Spleen (tissue), 13 donors: ENCODE measurements at regions of chr7 and their contacts with region 1.

Region 1: GRCh38 chr7:25069900-25070443 is 55.1 kb downstream of the CYCS start:
- DNase-seq: no peak
- H3K4me3 ChIP-seq: no peak overlapping the region
- H3K27ac ChIP-seq: no peak overlapping the region
- H3K4me1 ChIP-seq: peaks cover 0 to 9% (median 4%) of the 10 kb centered on the region in 6 donors
- H3K27me3 ChIP-seq: peaks cover 0 to 4% (median 0%) of the 10 kb centered on the region in 7 donors
- CTCF ChIP-seq: peak; percentile 64 to 91 (median 85)
- POLR2A ChIP-seq: no peak

Region 2: GRCh38 chr7:24812310-24812945 is 257.5 kb before region 1 on chr7:
- intact Hi-C with region 1: loop called (anchors 2 kb)
- DNase-seq: peak; percentile 79
- H3K4me3 ChIP-seq: no peak overlapping the region
- H3K27ac ChIP-seq: no peak overlapping the region
- H3K4me1 ChIP-seq: no peaks in the 10 kb centered on the region
- H3K27me3 ChIP-seq: no peaks in the 10 kb centered on the region
- CTCF ChIP-seq: peak; percentile 44 to 88 (median 78)
- POLR2A ChIP-seq: no peak

Region 3: DNA sequence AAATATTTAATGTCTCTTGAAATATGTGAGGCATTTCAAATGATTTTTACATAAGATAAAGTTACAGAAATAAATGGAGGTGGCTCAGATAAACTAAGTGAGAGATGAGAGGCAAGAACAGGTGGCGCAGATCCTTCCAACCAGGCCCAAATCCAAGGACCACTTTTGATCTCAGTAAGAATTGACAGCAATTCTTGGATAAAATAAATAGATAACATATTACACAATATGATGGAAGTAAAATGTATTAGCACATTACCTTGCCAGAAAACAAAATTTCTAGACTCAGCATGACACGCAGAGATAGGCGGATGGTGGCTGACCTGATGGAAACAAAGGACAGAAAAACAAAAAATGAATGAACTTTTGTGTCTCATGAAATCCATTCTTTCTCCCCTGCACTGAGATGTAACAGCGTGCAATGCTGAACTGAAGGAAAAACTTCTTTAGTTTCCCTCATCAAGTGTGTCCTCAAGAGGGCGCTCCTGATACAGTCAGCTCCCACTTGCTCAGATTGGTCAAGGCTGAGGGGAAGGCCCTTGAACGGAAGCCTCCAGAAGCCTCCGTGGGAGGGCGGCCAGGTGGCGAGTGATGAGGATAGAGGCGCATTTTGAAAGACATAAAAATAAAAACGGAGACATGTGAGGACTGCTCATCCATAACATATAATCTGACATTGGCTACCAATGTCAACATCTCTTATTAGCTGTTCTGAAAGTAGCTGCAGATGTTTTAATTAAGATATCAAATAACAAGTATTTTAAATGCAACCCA is 249.9 kb before region 1 on chr7:
- intact Hi-C with region 1: loop called (anchors 2 kb)
- DNase-seq: peak; percentile 90
- H3K4me3 ChIP-seq: no peak overlapping the region
- H3K27ac ChIP-seq: peak overlapping the region; percentile 22 to 86 (median 76)
- H3K4me1 ChIP-seq: peaks cover 8 to 32% (median 23%) of the 10 kb centered on the region in 6 donors
- H3K27me3 ChIP-seq: no peaks in the 10 kb centered on the region
- CTCF ChIP-seq: peak; percentile 46 to 87 (median 78)
- POLR2A ChIP-seq: no peak

Region 4: GRCh38 chr7:24896031-24896501 is 173.9 kb before region 1 on chr7:
- intact Hi-C with region 1: loop called (anchors 10 kb)
- DNase-seq: no peak
- H3K4me3 ChIP-seq: no peak overlapping the region
- H3K27ac ChIP-seq: peak overlapping the region in 3 of 8 donors; percentile 12 to 56 (median 24)
- H3K4me1 ChIP-seq: peaks cover 0 to 46% (median 20%) of the 10 kb centered on the region in 6 donors
- H3K27me3 ChIP-seq: no peaks in the 10 kb centered on the region
- CTCF ChIP-seq: peak in 6 of 11 experiments; percentile 16 to 40 (median 32)
- POLR2A ChIP-seq: no peak